Activated CD4-positive, alpha-beta T cell treated with anti-CD3 and anti-CD28 coated beads for 36 hours (primary cell): ENCODE measurements at regions of chr10 and their contacts with region 1.

Region 1: GRCh38 chr10:79542626-79543025 is 17.6 kb downstream of the SFTPA2 start:
- DNase-seq: no peak
- ATAC-seq: no peak
- H3K4me3 Mint-ChIP-seq: no peak overlapping the region
- H3K27ac Mint-ChIP-seq: no peak overlapping the region
- H3K4me1 Mint-ChIP-seq: peaks cover 2% of the 10 kb centered on the region
- H3K27me3 Mint-ChIP-seq: no peaks in the 10 kb centered on the region

Region 2: GRCh38 chr10:79608505-79609375 is 66.1 kb after region 1 on chr10:
- CTCF ChIA-PET with region 1: no interaction called
- POLR2A ChIA-PET with region 1: no interaction called
- intact Hi-C with region 1: loop called (anchors 1 kb)
- DNase-seq: peak; percentile 74
- ATAC-seq: peak; percentile 58
- H3K4me3 Mint-ChIP-seq: no peak overlapping the region
- H3K27ac Mint-ChIP-seq: no peak overlapping the region
- H3K4me1 Mint-ChIP-seq: no peaks in the 10 kb centered on the region
- H3K27me3 Mint-ChIP-seq: peaks cover 1% of the 10 kb centered on the region

Region 3: GRCh38 chr10:79929409-79929904 is 386.8 kb after region 1 on chr10:
- CTCF ChIA-PET with region 1: interaction called, 4 read pairs
- POLR2A ChIA-PET with region 1: no interaction called
- intact Hi-C with region 1: loop called (anchors 1 to 5 kb)
- DNase-seq: peak; percentile 91
- ATAC-seq: peak; percentile 97
- H3K4me3 Mint-ChIP-seq: no peak overlapping the region
- H3K27ac Mint-ChIP-seq: no peak overlapping the region
- H3K4me1 Mint-ChIP-seq: peaks cover 2% of the 10 kb centered on the region
- H3K27me3 Mint-ChIP-seq: peaks cover 21% of the 10 kb centered on the region

Region 4: GRCh38 chr10:80046629-80047441 is 504.2 kb after region 1 on chr10:
- CTCF ChIA-PET with region 1: interaction called, 7 read pairs
- POLR2A ChIA-PET with region 1: no interaction called
- intact Hi-C with region 1: loop called in 1 of 2 experiments (anchors 1 kb)
- DNase-seq: peak; percentile 86
- ATAC-seq: peak; percentile 85
- H3K4me3 Mint-ChIP-seq: no peak overlapping the region
- H3K27ac Mint-ChIP-seq: no peak overlapping the region
- H3K4me1 Mint-ChIP-seq: peaks cover 3% of the 10 kb centered on the region
- H3K27me3 Mint-ChIP-seq: no peaks in the 10 kb centered on the region